Activated B cell treated with CpG ODN at 0.5 μM for 24 hours (primary cell): ENCODE measurements at regions of chr7 and their contacts with region 1.

Region 1: DNA sequence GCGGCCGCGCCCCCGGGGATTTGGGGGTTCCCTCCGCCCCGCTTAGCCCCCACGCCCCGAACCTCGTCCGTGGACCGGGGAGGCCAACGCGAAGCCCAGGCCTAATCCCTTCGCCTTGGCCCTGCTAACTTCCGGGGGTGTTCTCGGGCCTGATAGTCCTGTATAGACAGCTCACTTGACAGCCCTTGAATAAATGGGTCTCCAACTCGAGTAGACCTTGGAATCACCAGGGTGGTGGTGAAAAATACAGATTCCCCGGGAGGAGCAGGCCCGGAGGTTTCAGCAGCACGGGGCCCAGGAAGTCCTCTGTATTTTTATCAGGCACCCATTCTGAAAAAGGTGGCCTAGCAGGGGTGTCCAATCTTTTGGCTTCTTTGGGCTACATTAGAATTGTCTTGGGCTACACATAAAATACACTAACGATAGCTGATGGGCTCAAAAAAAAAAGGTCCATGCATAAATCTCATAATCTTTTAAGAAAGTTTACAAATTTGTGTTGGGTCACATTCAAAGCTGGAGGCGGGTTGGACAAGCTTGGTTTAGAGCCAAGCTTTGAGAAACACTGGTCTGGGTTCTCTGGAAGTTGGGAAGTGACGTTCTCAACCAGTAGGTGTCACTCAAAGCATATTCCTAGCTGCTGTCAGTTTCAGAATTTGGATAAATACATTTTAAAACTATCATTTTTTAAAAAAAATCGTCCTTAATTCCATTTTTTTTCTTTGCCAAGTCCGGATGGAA is 221.7 kb downstream of the PHTF2 start:
- DNase-seq: no peak
- ATAC-seq: peak; percentile 35
- H3K4me3 Mint-ChIP-seq: peak overlapping the region; percentile 81
- H3K27ac Mint-ChIP-seq: peak overlapping the region; percentile 77
- H3K4me1 Mint-ChIP-seq: peaks cover 17% of the 10 kb centered on the region
- H3K27me3 Mint-ChIP-seq: no peaks in the 10 kb centered on the region
- CTCF ChIP-seq: no peak

Region 2: DNA sequence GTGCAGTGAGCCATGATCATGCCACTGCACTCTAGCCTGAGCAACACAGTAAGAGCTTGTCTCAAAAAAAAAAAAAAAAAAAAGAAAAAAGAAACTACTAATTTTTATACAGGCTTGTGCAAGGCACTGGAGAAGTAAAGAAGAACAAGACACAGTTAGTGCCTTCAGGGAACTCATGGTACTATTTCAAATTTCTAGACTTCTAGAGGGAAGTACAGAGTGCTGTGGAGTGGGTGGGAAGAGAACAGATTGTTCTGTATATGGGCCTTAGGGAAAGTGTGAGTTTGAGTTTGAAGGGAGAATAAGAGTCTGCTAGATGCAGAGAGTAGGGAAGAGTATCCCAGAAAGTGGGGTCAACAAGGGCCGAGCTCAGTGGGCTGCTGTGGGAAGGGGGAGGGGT is 13.1 kb after region 1 on chr7:
- CTCF ChIA-PET with region 1: interaction called, 19 read pairs
- POLR2A ChIA-PET with region 1: no interaction called
- intact Hi-C with region 1: no loop called
- DNase-seq: no peak
- ATAC-seq: no peak
- H3K4me3 Mint-ChIP-seq: no peak overlapping the region
- H3K27ac Mint-ChIP-seq: no peak overlapping the region
- H3K4me1 Mint-ChIP-seq: no peaks in the 10 kb centered on the region
- H3K27me3 Mint-ChIP-seq: peaks cover 25% of the 10 kb centered on the region
- CTCF ChIP-seq: no peak

Region 3: GRCh38 chr7:78039790-78040776 is 19.8 kb after region 1 on chr7:
- CTCF ChIA-PET with region 1: interaction called, 19 read pairs
- POLR2A ChIA-PET with region 1: no interaction called
- intact Hi-C with region 1: loop called (anchors 1 kb)
- DNase-seq: peak; percentile 55
- ATAC-seq: peak; percentile 79
- H3K4me3 Mint-ChIP-seq: no peak overlapping the region
- H3K27ac Mint-ChIP-seq: no peak overlapping the region
- H3K4me1 Mint-ChIP-seq: peaks cover 2% of the 10 kb centered on the region
- H3K27me3 Mint-ChIP-seq: peaks cover 20% of the 10 kb centered on the region
- CTCF ChIP-seq: peak; percentile 18

Region 4: GRCh38 chr7:78052112-78052511 is 31.8 kb after region 1 on chr7:
- CTCF ChIA-PET with region 1: no interaction called
- POLR2A ChIA-PET with region 1: no interaction called
- intact Hi-C with region 1: no loop called
- DNase-seq: no peak
- ATAC-seq: no peak
- H3K4me3 Mint-ChIP-seq: no peak overlapping the region
- H3K27ac Mint-ChIP-seq: no peak overlapping the region
- H3K4me1 Mint-ChIP-seq: no peaks in the 10 kb centered on the region
- H3K27me3 Mint-ChIP-seq: peaks cover 7% of the 10 kb centered on the region
- CTCF ChIP-seq: no peak

Region 5: GRCh38 chr7:78434281-78434680 is 414.0 kb after region 1 on chr7:
- CTCF ChIA-PET with region 1: no interaction called
- POLR2A ChIA-PET with region 1: no interaction called
- intact Hi-C with region 1: loop called (anchors 5 kb)
- DNase-seq: no peak
- ATAC-seq: no peak
- H3K4me3 Mint-ChIP-seq: no peak overlapping the region
- H3K27ac Mint-ChIP-seq: no peak overlapping the region
- H3K4me1 Mint-ChIP-seq: no peaks in the 10 kb centered on the region
- H3K27me3 Mint-ChIP-seq: peaks cover 1% of the 10 kb centered on the region
- CTCF ChIP-seq: no peak

Region 6: DNA sequence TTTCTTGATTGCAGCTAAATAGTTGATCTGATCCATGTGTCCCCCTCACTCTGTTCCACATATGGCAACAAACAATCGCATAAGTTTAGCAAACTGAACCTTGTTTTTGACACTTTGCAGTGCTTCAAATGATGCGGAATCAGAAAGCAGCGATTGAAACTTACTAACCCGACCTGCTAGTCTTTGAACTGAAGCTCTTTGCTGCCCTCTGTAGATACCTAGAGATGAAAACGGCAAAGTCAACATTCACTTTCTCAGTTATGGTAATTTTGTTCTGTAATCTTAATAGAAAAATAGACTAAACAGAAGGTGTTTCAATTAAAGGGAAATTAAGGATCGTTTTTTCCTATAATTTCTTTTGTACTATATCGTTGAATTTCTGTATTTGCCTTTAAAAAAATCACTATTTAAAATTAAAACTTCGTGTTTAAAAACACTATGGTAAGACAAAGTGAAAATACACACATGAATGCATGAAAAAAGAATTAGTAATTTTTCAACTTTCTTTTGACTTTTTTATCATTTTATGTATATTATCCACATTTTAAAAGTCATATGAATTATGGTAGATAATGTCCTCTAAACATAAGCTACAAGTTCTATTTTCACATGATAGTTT is 1156.7 kb after region 1 on chr7:
- CTCF ChIA-PET with region 1: no interaction called
- POLR2A ChIA-PET with region 1: no interaction called
- intact Hi-C with region 1: loop called (anchors 10 kb)
- DNase-seq: no peak
- ATAC-seq: no peak
- H3K4me3 Mint-ChIP-seq: no peak overlapping the region
- H3K27ac Mint-ChIP-seq: no peak overlapping the region
- H3K4me1 Mint-ChIP-seq: no peaks in the 10 kb centered on the region
- H3K27me3 Mint-ChIP-seq: no peaks in the 10 kb centered on the region
- CTCF ChIP-seq: no peak

Region 7: GRCh38 chr7:79268730-79269129 is 1248.4 kb after region 1 on chr7:
- CTCF ChIA-PET with region 1: no interaction called
- POLR2A ChIA-PET with region 1: no interaction called
- intact Hi-C with region 1: loop called (anchors 2 kb)
- DNase-seq: no peak
- ATAC-seq: no peak
- H3K4me3 Mint-ChIP-seq: no peak overlapping the region
- H3K27ac Mint-ChIP-seq: no peak overlapping the region
- H3K4me1 Mint-ChIP-seq: no peaks in the 10 kb centered on the region
- H3K27me3 Mint-ChIP-seq: no peaks in the 10 kb centered on the region
- CTCF ChIP-seq: no peak